ENCODE measurements at regions of chr1 and their contacts with region 1.

Region 1: DNA sequence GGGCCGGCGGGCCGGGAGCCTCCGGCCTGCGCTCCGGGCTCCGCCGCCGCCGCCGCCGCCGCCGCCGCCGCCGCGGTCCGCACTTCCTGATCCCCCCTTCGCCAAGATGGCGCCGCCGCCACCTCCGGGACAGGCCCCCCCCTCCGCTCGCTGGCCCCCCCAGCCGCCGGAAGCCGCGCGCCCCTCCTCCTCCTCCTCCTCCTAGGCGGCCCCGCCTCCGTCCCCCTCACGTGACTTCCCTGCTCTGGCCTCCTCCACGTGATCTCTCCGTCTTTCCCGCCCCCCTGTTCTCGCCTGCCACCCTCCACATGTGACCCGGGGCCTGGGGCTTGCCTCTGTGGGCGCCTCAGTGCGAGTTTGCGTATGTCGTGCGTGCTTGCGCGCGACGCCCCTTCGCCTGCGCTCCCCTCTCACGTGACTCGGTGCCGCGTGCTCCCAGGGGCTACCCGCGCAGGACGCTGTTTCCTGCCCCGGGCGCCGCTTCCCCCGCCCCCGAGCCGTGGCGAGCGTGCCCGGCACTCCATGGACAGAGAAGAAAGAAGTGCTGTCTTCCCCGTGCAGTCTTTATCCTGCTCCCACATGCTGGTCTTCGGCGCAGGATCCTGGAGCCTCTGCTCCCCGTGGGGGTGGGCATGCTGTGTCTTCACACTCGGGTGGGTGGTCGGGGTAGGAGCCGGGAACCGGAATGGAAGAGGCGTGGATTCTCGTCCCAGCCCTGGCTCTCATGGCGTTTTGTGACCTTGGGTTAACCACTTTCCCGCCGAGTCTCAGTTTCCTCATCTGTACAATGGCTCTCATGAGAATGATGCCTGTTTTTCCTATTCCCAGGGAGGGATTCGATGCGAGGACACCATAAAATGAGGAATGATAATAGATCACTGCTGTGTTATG is at the start of gene UBE2Q1:
- DNase-seq: peak; percentile 99 to 100 (median 99)
- ATAC-seq: peak; percentile 88
- H3K4me3 ChIP-seq: peak within 1 kb of the TSS; percentile 70 to 83
- H3K4me3 Mint-ChIP-seq: peak within 1 kb of the TSS; percentile 90
- H3K27ac ChIP-seq: peak within 1 kb of the TSS; percentile 63 to 94
- H3K27ac Mint-ChIP-seq: peak within 1 kb of the TSS; percentile 89
- H3K4me1 ChIP-seq: peaks cover 20% of the 10 kb centered on the region
- H3K4me1 Mint-ChIP-seq: peaks cover 35% of the 10 kb centered on the region
- H3K27me3 ChIP-seq: no peaks in the 10 kb centered on the region
- H3K27me3 Mint-ChIP-seq: no peaks in the 10 kb centered on the region
- CTCF ChIP-seq: no peak
- total RNA-seq, gene UBE2Q1: 77.5 to 77.7 TPM

Region 2: GRCh38 chr1:153922972-153923925 is 635.6 kb before region 1 on chr1 and contains the start of gene GATAD2B:
- CTCF ChIA-PET with region 1: no interaction called
- POLR2A ChIA-PET with region 1: no interaction called
- intact Hi-C with region 1: loop called in 1 of 2 experiments (anchors 2 kb)
- DNase-seq: peak; percentile 97 to 100 (median 99)
- ATAC-seq: peak; percentile 89
- H3K4me3 ChIP-seq: peak within 1 kb of the TSS; percentile 81 to 83
- H3K4me3 Mint-ChIP-seq: peak within 1 kb of the TSS; percentile 93
- H3K27ac ChIP-seq: peak within 1 kb of the TSS; percentile 83 to 95
- H3K27ac Mint-ChIP-seq: peak within 1 kb of the TSS; percentile 97
- H3K4me1 ChIP-seq: peaks cover 44% of the 10 kb centered on the region
- H3K4me1 Mint-ChIP-seq: peaks cover 44% of the 10 kb centered on the region
- H3K27me3 ChIP-seq: no peaks in the 10 kb centered on the region
- H3K27me3 Mint-ChIP-seq: no peaks in the 10 kb centered on the region
- CTCF ChIP-seq: no peak
- total RNA-seq, gene GATAD2B: 52.0 to 52.1 TPM

Region 3: DNA sequence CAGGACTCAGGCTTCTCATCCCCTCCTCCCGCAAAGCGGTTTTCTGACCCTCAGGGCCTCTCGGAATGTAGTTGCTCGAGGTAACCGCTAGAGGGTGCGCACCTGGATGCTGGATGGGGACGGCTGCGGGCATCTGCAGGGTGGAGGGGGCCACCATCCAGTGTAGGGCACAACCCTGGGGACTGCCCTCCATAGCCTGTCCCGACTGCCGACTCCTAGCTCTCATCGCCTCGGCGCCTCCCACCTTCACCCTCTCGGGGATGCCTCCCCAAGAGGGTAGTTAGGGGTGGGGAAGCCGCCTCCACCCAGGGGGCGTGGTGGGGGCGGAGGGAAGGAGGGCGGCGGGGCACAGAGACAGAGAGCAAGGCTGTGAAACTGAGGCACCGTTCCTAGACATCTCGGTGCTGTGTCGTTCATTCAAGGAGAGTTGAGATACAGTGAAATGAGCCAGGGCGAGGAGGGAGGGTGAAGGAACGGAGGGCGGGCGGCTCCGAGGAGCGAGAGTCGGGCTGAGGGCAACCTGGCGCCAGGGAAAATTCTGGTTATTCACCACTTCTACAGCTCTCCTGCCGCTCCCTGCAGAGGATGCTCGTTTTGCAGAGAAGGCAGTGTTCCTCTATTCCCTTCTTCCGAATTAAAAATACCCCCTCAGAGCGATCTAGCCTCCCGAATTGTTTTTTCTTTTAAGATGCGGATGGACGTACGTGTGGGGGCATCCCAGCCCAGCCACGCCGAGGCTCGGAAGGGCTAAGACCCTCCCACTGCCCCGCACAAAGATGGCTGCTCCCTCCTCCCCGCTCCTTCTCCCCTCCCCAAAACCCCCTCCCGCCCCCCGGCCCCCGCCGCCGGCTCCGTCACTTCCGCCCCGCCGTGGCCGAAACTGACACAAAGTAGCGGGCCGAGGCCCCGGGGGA is 233.9 kb before region 1 on chr1 and contains the start of gene ATP8B2:
- CTCF ChIA-PET with region 1: interaction called, 4 read pairs
- POLR2A ChIA-PET with region 1: no interaction called
- intact Hi-C with region 1: loop called (anchors 1 to 2 kb)
- DNase-seq: peak; percentile 63 to 91 (median 82)
- ATAC-seq: peak; percentile 59
- H3K4me3 ChIP-seq: peak within 1 kb of the TSS; percentile 94 to 98
- H3K4me3 Mint-ChIP-seq: peak within 1 kb of the TSS; percentile 96
- H3K27ac ChIP-seq: peak within 1 kb of the TSS; percentile 69 to 87
- H3K27ac Mint-ChIP-seq: peak within 1 kb of the TSS; percentile 93
- H3K4me1 ChIP-seq: peaks cover 43% of the 10 kb centered on the region
- H3K4me1 Mint-ChIP-seq: peaks cover 47% of the 10 kb centered on the region
- H3K27me3 ChIP-seq: no peaks in the 10 kb centered on the region
- H3K27me3 Mint-ChIP-seq: peaks cover 6% of the 10 kb centered on the region
- CTCF ChIP-seq: peak; percentile 96
- total RNA-seq, gene ATP8B2: 51.1 to 58.4 TPM

Region 4: DNA sequence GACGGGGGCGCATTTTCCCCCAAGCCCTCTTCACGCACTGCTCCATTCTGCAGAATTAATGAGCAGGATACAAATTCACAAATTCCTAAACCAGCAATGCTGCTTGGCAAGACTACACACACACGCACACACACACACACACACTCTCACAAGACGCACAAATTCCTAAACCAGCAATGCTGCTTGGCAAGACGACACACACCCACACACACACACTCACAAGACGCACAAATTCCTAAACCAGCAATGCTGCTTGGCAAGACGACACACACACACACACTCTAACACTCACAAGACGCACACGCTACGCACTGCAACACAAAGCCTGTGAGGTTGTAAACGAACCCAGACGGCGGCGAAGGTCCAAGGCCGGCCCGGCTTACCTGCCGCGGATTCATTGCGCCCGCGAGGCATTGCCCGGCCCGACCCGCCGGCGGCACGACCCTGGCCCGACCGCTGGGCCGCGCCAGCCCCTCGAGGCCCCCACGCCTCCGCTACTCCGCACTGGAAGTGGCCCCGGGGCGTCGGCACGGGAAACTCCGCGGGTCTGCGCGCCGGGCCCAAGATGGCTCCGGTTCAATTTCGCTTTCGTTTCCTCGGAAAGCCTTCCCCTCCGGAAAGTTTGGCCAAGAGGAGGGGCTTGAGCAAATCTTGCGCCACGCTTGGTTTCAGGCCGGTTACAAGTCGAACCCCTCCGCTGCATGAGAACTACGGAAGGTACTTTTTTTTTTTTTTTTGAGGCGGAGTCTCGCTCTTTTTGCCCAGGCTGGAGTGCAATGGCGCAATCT is 49.0 kb after region 1 on chr1 and contains the start of gene ADAR:
- CTCF ChIA-PET with region 1: interaction called, 17 read pairs
- POLR2A ChIA-PET with region 1: interaction called, 5 read pairs
- intact Hi-C with region 1: loop called (anchors 1 kb)
- DNase-seq: peak; percentile 72 to 98 (median 87)
- ATAC-seq: peak; percentile 85
- H3K4me3 ChIP-seq: peak within 1 kb of the TSS; percentile 89 to 90
- H3K4me3 Mint-ChIP-seq: peak within 1 kb of the TSS; percentile 98
- H3K27ac ChIP-seq: peak within 1 kb of the TSS; percentile 92 to 96
- H3K27ac Mint-ChIP-seq: peak within 1 kb of the TSS; percentile 98
- H3K4me1 ChIP-seq: peaks cover 59% of the 10 kb centered on the region
- H3K4me1 Mint-ChIP-seq: peaks cover 73% of the 10 kb centered on the region
- H3K27me3 ChIP-seq: no peaks in the 10 kb centered on the region
- H3K27me3 Mint-ChIP-seq: no peaks in the 10 kb centered on the region
- CTCF ChIP-seq: no peak
- total RNA-seq, gene ADAR: 221 to 238 TPM

Region 5: DNA sequence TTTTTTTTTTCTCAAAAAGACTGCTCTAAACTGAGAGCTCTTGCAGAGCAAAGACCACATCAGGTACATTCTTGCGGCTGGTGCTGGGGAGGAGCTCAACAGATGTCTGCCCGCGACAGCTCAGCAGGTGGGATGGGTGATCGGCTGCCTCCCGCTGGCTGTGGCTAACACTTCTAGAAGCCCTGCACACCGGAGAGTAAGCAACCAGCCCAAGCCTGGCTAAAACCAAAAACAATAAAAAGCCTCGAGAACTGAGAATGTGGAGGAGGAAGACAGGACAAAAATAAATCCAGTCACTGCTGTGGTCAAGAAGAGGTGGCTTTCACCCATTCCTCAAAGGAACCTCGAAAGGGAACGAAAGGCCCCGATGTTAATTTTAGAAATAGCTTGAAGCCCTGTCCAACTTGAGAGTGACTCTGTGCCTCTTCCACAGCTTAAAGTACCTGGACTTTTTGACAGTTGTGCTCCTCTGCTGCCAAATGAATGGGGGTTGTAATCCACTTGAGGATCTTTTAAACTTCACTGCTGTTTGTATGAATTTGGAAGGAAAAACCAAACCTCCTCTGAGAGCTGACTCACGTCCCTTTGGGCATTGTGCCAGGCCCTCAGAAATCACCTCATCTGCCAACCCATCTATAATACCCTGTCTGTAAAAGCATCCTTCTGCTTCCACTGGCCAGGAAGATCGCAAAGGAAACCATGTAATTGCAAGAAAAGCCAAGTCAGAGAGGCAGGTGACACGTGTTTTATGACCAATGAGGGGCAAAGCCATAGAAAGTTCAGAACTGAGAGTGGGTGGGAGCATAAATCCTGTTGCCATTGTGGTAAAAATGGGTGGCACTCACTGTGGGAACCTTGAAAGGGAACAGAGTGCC is 232.7 kb after region 1 on chr1:
- CTCF ChIA-PET with region 1: interaction called, 5 read pairs
- POLR2A ChIA-PET with region 1: no interaction called
- intact Hi-C with region 1: loop called (anchors 1 kb)
- DNase-seq: peak; percentile 69 to 97 (median 85)
- ATAC-seq: peak; percentile 93
- H3K4me3 ChIP-seq: peak overlapping the region in 1 of 2 experiments; percentile 5
- H3K4me3 Mint-ChIP-seq: peak overlapping the region; percentile 73
- H3K27ac ChIP-seq: peak overlapping the region; percentile 10 to 25
- H3K27ac Mint-ChIP-seq: peak overlapping the region; percentile 90
- H3K4me1 ChIP-seq: peaks cover 27% of the 10 kb centered on the region
- H3K4me1 Mint-ChIP-seq: peaks cover 39% of the 10 kb centered on the region
- H3K27me3 ChIP-seq: no peaks in the 10 kb centered on the region
- H3K27me3 Mint-ChIP-seq: no peaks in the 10 kb centered on the region
- CTCF ChIP-seq: peak; percentile 27

Region 6: DNA sequence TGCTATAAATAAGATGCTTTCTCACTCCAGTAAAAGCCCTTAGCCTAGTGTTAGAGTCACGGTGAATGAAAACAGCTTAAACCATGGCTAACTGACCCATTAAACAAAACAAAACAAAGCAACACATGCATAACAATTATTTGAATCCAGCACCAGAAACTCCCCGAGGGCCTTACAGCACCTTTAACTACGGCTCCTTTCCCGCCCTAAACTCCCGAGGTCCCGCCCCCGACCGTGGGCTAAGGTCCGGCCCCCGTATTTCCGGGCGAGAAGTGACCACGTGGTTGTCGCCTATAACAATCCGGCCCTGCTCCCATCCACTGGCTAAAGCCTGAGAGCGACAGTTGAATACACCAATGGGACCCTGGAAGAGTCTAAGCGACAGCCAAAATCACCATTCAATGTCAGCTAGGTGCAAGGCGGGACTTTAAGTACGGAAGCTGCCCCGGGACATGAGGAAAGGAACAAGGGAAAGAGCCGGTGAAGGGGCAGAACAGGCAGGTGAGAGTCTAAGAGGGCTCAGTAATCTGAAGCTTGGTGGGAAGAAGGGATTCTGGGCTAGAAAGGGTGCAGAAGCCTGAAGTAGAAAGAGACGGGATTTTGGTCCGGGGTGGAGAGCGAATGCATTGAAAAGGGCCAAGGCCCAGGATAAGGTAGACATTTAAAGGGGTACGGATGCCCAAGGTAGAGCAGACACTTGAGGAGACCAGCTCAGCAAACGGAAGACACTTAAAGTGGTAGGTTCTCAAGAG is 424.3 kb after region 1 on chr1 and contains the start of gene FLAD1:
- CTCF ChIA-PET with region 1: no interaction called
- POLR2A ChIA-PET with region 1: no interaction called
- intact Hi-C with region 1: loop called in 1 of 2 experiments (anchors 1 kb)
- DNase-seq: peak; percentile 86 to 99 (median 94)
- ATAC-seq: peak; percentile 98
- H3K4me3 ChIP-seq: peak within 1 kb of the TSS; percentile 57 to 86
- H3K4me3 Mint-ChIP-seq: no peak within 1 kb of the TSS
- H3K27ac ChIP-seq: peak within 1 kb of the TSS; percentile 51 to 82
- H3K27ac Mint-ChIP-seq: no peak within 1 kb of the TSS
- H3K4me1 ChIP-seq: peaks cover 12% of the 10 kb centered on the region
- H3K4me1 Mint-ChIP-seq: peaks cover 12% of the 10 kb centered on the region
- H3K27me3 ChIP-seq: no peaks in the 10 kb centered on the region
- H3K27me3 Mint-ChIP-seq: no peaks in the 10 kb centered on the region
- CTCF ChIP-seq: no peak
- total RNA-seq, gene FLAD1: 17.4 to 19.0 TPM

Region 7: DNA sequence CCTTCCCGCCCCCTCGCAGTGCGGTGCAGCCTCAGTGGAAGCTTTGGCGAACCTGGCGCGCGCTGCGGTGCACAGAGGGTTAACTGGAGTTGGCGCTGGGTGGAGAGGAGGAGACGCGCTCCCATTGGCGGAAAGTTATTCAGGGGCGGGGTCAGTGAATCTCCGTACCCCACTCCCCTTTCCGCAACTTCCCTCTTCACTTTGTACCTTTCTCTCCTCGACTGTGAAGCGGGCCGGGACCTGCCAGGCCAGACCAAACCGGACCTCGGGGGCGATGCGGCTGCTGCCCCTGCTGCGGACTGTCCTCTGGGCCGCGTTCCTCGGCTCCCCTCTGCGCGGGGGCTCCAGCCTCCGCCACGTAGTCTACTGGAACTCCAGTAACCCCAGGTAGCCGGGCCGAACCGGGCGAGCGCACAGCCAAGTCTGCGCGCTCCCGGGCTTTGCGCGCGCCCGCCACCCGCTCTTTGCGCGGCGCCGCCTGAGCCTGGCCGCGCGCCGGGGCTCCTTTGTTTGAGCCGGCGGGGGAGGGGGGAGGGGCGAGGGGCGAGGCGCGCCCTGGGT is 504.8 kb after region 1 on chr1 and contains the start of gene EFNA4:
- CTCF ChIA-PET with region 1: interaction called, 4 read pairs
- POLR2A ChIA-PET with region 1: no interaction called
- intact Hi-C with region 1: loop called (anchors 1 kb)
- DNase-seq: peak; percentile 59 to 92 (median 83)
- ATAC-seq: peak; percentile 87
- H3K4me3 ChIP-seq: peak within 1 kb of the TSS; percentile 79 to 85
- H3K4me3 Mint-ChIP-seq: peak within 1 kb of the TSS; percentile 88
- H3K27ac ChIP-seq: peak within 1 kb of the TSS in 1 of 2 experiments; percentile 34
- H3K27ac Mint-ChIP-seq: peak within 1 kb of the TSS; percentile 77
- H3K4me1 ChIP-seq: peaks cover 33% of the 10 kb centered on the region
- H3K4me1 Mint-ChIP-seq: peaks cover 36% of the 10 kb centered on the region
- H3K27me3 ChIP-seq: no peaks in the 10 kb centered on the region
- H3K27me3 Mint-ChIP-seq: no peaks in the 10 kb centered on the region
- CTCF ChIP-seq: no peak
- total RNA-seq, gene EFNA4: 1.4 to 1.8 TPM